H1 (cell line): ENCODE measurements at regions of chr10 and their contacts with region 1.

Region 1: DNA sequence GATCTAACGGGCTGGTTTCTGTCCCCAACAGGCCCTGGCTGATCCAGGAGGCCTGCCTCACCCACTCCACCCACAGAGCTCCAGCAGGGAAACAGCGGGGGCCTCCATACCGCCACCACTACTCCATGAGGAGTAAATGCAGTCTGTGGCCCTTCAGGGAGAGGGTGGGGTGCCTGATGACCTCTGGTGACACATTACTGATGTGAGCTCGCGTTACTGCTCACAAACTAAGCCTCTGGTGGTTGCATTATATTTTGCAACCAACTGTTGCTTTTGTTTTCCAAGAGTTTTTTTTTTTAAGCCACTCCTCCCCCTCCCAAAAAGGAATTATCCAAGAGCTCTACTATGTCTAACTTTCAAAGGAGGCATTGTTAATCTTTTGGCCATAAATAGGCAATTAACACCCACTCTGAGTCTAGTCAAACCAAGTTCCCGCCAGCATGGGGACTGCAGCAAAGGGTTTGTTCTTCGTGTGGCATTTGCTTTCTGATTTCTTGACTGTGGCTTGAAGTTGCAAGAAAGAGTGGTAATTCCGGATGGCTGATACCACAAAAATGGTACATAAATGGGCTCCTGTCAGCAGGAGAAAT is 72.6 kb downstream of the FAM53B start:
- DNase-seq: no peak
- H3K4me3 ChIP-seq: no peak overlapping the region
- H3K27ac ChIP-seq: no peak overlapping the region
- H3K4me1 ChIP-seq: peaks cover 0 to 8% (median 2%) of the 10 kb centered on the region in 4 experiments; a peak in 4 of 7 replicates
- H3K27me3 ChIP-seq: no peaks in the 10 kb centered on the region
- CTCF ChIP-seq: peak; percentile 15 to 32 (median 27)
- EP300 ChIP-seq: no peak
- POLR2A ChIP-seq: no peak
- RAD21 ChIP-seq: peak in 1 of 2 experiments; percentile 20; a peak in 2 of 4 replicates

Region 2: DNA sequence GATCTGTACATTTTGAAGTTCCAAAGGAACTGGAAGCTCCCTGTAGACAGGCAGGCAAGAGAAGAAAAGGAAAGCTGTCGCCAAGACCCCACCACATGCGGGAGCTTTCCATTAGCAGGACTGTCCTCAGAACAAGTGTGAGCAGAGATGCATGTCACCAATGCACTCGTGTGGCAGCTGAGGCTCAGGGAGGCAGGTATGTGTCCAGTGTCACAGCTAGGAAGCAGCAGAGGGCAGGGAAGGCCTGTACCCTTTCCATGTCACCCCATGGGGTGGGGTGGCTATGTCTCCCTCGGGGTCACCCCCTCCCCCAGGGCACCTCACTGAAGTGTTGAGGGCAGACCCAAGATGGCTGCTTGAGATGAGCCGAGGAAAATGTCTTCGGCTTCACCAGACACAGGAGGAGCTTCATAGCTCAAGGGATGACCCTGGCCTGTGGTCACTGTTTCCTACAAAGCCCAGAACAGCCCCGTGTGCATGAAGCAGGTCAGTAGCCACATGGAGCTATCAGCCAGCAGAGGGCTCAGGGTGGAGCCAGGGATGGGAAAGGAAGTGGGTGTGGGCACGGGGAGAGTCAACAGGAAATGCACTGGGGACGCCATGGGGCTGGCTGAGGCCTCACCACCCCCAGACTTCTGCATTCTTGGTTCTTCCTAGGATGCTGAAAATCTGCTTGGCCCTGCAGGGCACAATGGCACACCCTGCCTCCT is 24.0 kb before region 1 on chr10:
- CTCF ChIA-PET with region 1: interaction called, 18 read pairs
- POLR2A ChIA-PET with region 1: no interaction called
- DNase-seq: no peak
- H3K4me3 ChIP-seq: no peak overlapping the region
- H3K27ac ChIP-seq: no peak overlapping the region
- H3K4me1 ChIP-seq: peaks cover 0 to 24% (median 17%) of the 10 kb centered on the region in 4 experiments; a peak in 6 of 7 replicates
- H3K27me3 ChIP-seq: no peaks in the 10 kb centered on the region
- CTCF ChIP-seq: peak in 2 of 3 experiments; percentile 15 to 20; a peak in 2 of 4 replicates
- EP300 ChIP-seq: no peak
- POLR2A ChIP-seq: no peak
- RAD21 ChIP-seq: peak in 1 of 2 experiments; percentile 17; a peak in 1 of 4 replicates

Region 3: DNA sequence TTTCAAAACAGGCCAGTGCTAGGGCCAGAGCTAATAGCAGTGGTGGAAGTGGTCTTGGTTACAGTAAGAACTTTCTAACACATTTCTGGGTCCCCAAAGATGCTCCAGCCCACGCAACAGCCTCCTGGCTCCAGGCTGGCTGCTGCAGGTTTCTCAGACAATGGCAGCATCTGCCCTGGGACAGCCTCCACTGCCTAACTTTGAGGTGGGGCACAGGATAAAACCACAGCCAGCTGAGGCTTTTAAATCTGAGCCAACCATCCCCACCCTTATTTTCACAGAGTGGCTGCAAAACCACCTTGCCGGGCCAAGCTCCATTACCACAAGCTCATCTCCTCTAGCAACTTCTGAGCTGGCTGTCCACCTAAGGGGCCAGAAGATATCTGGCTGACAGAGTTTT is 12.2 kb before region 1 on chr10:
- CTCF ChIA-PET with region 1: interaction called, 11 read pairs
- POLR2A ChIA-PET with region 1: interaction called, 3 read pairs
- DNase-seq: no peak
- H3K4me3 ChIP-seq: no peak overlapping the region
- H3K27ac ChIP-seq: no peak overlapping the region
- H3K4me1 ChIP-seq: peaks cover 0 to 3% (median 0%) of the 10 kb centered on the region in 4 experiments; a peak in 2 of 7 replicates
- H3K27me3 ChIP-seq: no peaks in the 10 kb centered on the region
- CTCF ChIP-seq: no peak
- EP300 ChIP-seq: no peak
- POLR2A ChIP-seq: no peak
- RAD21 ChIP-seq: no peak

Region 4: GRCh38 chr10:124688889-124689670 is 17.5 kb after region 1 on chr10:
- CTCF ChIA-PET with region 1: interaction called, 14 read pairs
- POLR2A ChIA-PET with region 1: no interaction called
- DNase-seq: no peak
- H3K4me3 ChIP-seq: no peak overlapping the region
- H3K27ac ChIP-seq: no peak overlapping the region
- H3K4me1 ChIP-seq: peaks cover 0 to 10% (median 5%) of the 10 kb centered on the region in 4 experiments; a peak in 3 of 7 replicates
- H3K27me3 ChIP-seq: no peaks in the 10 kb centered on the region
- CTCF ChIP-seq: no peak
- EP300 ChIP-seq: no peak
- POLR2A ChIP-seq: no peak
- RAD21 ChIP-seq: no peak